A673 (cell line): ENCODE measurements at regions of chr13 and their contacts with region 1.

Region 1: DNA sequence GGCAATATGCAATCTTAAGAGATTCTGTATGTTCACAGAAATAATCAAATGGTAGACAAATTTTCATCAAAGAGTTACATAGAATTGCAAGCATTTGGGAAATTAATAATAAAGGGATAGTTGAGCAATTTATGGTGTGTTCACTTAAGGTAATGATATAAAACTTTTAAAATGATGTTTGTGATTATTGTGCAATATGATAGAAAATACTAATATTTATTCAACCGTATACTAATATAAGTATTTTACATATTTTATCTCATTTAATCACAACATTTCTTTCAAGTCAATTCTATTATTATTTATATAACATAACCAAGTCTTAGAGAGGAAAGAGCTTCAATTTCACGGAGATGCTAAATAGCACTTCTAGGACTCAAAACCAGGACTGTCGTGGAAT is 716.8 kb upstream of the MIR17HG start:
- DNase-seq: no peak
- H3K4me3 ChIP-seq: no peak overlapping the region
- H3K27ac ChIP-seq: no peak overlapping the region
- H3K4me1 ChIP-seq: no peaks in the 10 kb centered on the region
- H3K27me3 ChIP-seq: no peaks in the 10 kb centered on the region
- CTCF ChIP-seq: no peak

Region 2: DNA sequence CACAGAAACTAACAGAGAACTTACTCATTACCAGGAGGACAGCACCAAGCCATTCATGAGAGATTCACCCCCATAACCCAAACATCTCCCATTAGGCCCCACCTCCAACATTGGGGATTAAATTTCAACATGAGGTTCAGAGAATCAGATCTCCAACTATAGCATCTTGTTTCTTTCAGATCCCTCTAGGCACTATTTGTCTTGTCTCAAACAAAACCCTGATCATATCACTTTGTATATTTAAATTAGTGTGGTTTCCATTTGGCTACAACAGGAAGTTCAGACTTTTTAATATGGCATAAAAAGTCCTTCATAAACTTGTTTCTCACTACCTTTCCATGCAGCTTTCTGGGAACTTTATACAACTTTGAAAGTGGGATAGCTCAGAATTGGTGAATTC is 17.8 kb after region 1 on chr13:
- CTCF ChIA-PET with region 1: no interaction called
- POLR2A ChIA-PET with region 1: no interaction called
- intact Hi-C with region 1: loop called (anchors 2 kb)
- DNase-seq: no peak
- H3K4me3 ChIP-seq: no peak overlapping the region
- H3K27ac ChIP-seq: no peak overlapping the region
- H3K4me1 ChIP-seq: no peaks in the 10 kb centered on the region
- H3K27me3 ChIP-seq: no peaks in the 10 kb centered on the region
- CTCF ChIP-seq: no peak

Region 3: GRCh38 chr13:90710164-90710759 is 79.5 kb after region 1 on chr13:
- CTCF ChIA-PET with region 1: no interaction called
- POLR2A ChIA-PET with region 1: no interaction called
- intact Hi-C with region 1: no loop called
- DNase-seq: no peak
- H3K4me3 ChIP-seq: no peak overlapping the region
- H3K27ac ChIP-seq: no peak overlapping the region
- H3K4me1 ChIP-seq: no peaks in the 10 kb centered on the region
- H3K27me3 ChIP-seq: no peaks in the 10 kb centered on the region
- CTCF ChIP-seq: no peak